Naive thymus-derived CD4-positive, alpha-beta T cell (primary cell): ENCODE measurements at regions of chr10 and their contacts with region 1.

Region 1: DNA sequence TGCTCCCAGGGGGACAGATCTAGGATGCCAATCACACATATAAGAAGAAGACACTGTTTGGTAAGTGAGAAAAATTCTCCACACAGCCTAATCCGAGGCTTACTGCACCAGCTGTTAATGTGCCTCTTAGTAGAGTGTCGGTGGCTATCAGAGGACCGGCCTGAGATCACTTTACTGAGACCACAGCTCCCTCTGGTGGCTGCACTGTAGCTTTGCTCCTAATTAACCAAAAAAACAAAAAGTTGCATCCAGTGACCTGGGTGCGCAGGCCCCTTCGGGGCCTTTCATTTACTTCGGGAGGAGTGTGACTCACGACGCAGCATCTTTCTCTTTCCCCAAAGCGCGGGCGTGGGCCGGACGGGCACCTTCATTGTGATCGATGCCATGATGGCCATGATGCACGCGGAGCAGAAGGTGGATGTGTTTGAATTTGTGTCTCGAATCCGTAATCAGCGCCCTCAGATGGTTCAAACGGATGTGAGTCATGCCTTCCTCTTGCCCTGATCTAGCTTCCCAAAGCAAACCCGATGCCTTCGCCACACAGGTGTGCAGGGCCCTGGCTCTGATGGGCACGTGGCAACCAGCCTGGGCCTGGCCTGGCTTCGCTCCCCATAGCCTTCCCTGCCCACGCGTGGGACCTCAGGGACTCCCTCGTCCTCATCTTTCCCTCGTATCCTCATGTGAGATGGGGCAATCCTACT is 56.7 kb downstream of the MKI67 start:
- DNase-seq: peak; percentile 56 to 81 (median 76)
- ATAC-seq: peak; percentile 66
- H3K4me3 ChIP-seq: no peak overlapping the region
- H3K4me3 Mint-ChIP-seq: no peak overlapping the region
- H3K27ac ChIP-seq: no peak overlapping the region
- H3K27ac Mint-ChIP-seq: peak overlapping the region in 4 of 9 donors; percentile 45 to 65 (median 54)
- H3K4me1 ChIP-seq: peaks cover 16 to 19% of the 10 kb centered on the region in 2 donors
- H3K4me1 Mint-ChIP-seq: peaks cover 31 to 50% (median 37%) of the 10 kb centered on the region in 7 donors
- H3K27me3 ChIP-seq: no peaks in the 10 kb centered on the region
- H3K27me3 Mint-ChIP-seq: no peaks in the 10 kb centered on the region

Region 2: DNA sequence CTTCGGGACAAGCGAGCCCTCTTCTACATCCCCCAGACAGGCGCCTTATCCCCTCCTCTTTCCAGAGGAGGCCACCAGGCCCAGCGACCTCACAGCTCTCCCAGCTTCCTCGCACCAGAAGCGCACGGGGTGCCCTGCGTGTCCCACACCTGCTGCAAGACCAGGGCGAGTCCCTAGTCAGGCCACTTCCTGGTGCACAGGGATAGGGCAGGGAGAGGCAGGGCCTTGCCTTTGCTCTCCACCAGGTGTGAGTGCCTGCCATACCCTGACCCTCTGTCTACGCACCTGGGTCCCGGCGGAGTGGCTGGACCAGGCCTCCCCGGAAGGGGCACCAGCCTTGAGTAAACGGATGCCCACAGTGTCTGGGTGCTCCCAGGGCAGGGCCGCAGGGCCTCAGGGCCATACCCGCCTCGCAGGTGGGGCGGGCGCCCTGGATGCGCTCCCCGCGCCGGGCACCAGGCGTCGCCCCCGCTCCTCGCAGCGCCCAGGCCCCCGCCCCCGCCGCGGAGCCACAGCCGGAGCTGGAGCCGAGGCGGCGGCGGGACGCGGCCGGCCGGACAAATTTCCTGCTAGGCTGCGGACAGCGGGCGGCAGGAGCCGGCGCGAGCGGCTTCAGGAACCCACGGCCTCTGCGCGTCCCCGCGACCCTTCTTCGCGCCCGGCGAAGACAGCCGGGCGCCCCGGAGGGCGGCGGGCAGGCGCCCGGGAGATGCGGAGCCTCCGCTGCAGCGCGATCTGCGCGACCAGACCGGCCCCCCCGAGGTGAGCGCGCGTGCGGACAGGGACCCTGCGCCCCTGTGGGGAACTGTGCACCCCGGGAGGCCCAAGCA is 162.7 kb before region 1 on chr10 and contains the start of gene PTPRE:
- CTCF ChIA-PET with region 1: interaction called, 11 read pairs
- POLR2A ChIA-PET with region 1: no interaction called
- intact Hi-C with region 1: loop called in 1 of 2 experiments (anchors 1 kb)
- DNase-seq: peak; percentile 18 to 82 (median 65)
- ATAC-seq: peak; percentile 95
- H3K4me3 ChIP-seq: peak within 1 kb of the TSS; percentile 39
- H3K4me3 Mint-ChIP-seq: peak within 1 kb of the TSS; percentile 8 to 61 (median 38)
- H3K27ac ChIP-seq: no peak within 1 kb of the TSS
- H3K27ac Mint-ChIP-seq: no peak within 1 kb of the TSS
- H3K4me1 ChIP-seq: no peaks in the 10 kb centered on the region
- H3K4me1 Mint-ChIP-seq: peaks cover 0 to 8% (median 0%) of the 10 kb centered on the region in 7 donors
- H3K27me3 ChIP-seq: no peaks in the 10 kb centered on the region
- H3K27me3 Mint-ChIP-seq: peaks cover 20 to 44% (median 24%) of the 10 kb centered on the region in 5 donors
- total RNA-seq, gene PTPRE: 25.4 to 237 (median 29.1) TPM

Region 3: GRCh38 chr10:127919418-127920271 is 149.9 kb before region 1 on chr10:
- CTCF ChIA-PET with region 1: no interaction called
- POLR2A ChIA-PET with region 1: no interaction called
- intact Hi-C with region 1: no loop called
- DNase-seq: no peak
- ATAC-seq: peak; percentile 36
- H3K4me3 ChIP-seq: no peak overlapping the region
- H3K4me3 Mint-ChIP-seq: no peak overlapping the region
- H3K27ac ChIP-seq: no peak overlapping the region
- H3K27ac Mint-ChIP-seq: no peak overlapping the region
- H3K4me1 ChIP-seq: no peaks in the 10 kb centered on the region
- H3K4me1 Mint-ChIP-seq: peaks cover 0 to 10% (median 0%) of the 10 kb centered on the region in 7 donors
- H3K27me3 ChIP-seq: no peaks in the 10 kb centered on the region
- H3K27me3 Mint-ChIP-seq: no peaks in the 10 kb centered on the region

Region 4: DNA sequence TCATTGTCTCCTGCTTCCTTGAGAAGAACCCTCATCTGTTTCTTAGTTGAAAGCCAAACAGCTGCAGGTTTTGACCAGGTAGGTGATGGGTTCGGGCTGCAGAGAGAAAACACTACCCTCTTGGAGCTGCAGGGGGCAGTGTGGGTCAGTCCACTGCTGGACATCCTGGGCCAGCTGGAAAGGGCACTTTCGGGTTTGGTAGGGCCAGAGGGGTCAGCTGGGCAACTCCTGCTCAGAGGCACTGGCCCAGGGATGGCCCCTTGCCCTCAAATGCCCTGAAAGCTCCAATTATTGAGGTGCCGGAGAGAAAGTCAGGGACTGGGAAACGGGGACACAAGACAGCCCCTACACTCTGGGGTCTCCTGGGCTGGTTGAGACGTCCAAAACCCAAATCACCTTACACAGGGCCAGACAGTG is 33.9 kb before region 1 on chr10:
- CTCF ChIA-PET with region 1: interaction called, 217 read pairs
- POLR2A ChIA-PET with region 1: interaction called, 7 read pairs
- intact Hi-C with region 1: loop called (anchors 1 kb)
- DNase-seq: peak in 8 of 9 donors; percentile 33 to 69 (median 50)
- ATAC-seq: peak; percentile 94
- H3K4me3 ChIP-seq: no peak overlapping the region
- H3K4me3 Mint-ChIP-seq: no peak overlapping the region
- H3K27ac ChIP-seq: no peak overlapping the region
- H3K27ac Mint-ChIP-seq: no peak overlapping the region
- H3K4me1 ChIP-seq: no peaks in the 10 kb centered on the region
- H3K4me1 Mint-ChIP-seq: peaks cover 0 to 10% (median 0%) of the 10 kb centered on the region in 7 donors
- H3K27me3 ChIP-seq: no peaks in the 10 kb centered on the region
- H3K27me3 Mint-ChIP-seq: peaks cover 0 to 9% (median 0%) of the 10 kb centered on the region in 5 donors

Region 5: GRCh38 chr10:128058750-128059134 is 10.8 kb before region 1 on chr10:
- CTCF ChIA-PET with region 1: interaction called, 10 read pairs
- POLR2A ChIA-PET with region 1: no interaction called
- intact Hi-C with region 1: no loop called
- DNase-seq: no peak
- ATAC-seq: no peak
- H3K4me3 ChIP-seq: no peak overlapping the region
- H3K4me3 Mint-ChIP-seq: no peak overlapping the region
- H3K27ac ChIP-seq: no peak overlapping the region
- H3K27ac Mint-ChIP-seq: peak overlapping the region in 7 of 9 donors; percentile 5 to 78 (median 57)
- H3K4me1 ChIP-seq: peaks cover 18 to 37% of the 10 kb centered on the region in 2 donors
- H3K4me1 Mint-ChIP-seq: peaks cover 23 to 74% (median 46%) of the 10 kb centered on the region in 7 donors
- H3K27me3 ChIP-seq: no peaks in the 10 kb centered on the region
- H3K27me3 Mint-ChIP-seq: no peaks in the 10 kb centered on the region

Region 6: DNA sequence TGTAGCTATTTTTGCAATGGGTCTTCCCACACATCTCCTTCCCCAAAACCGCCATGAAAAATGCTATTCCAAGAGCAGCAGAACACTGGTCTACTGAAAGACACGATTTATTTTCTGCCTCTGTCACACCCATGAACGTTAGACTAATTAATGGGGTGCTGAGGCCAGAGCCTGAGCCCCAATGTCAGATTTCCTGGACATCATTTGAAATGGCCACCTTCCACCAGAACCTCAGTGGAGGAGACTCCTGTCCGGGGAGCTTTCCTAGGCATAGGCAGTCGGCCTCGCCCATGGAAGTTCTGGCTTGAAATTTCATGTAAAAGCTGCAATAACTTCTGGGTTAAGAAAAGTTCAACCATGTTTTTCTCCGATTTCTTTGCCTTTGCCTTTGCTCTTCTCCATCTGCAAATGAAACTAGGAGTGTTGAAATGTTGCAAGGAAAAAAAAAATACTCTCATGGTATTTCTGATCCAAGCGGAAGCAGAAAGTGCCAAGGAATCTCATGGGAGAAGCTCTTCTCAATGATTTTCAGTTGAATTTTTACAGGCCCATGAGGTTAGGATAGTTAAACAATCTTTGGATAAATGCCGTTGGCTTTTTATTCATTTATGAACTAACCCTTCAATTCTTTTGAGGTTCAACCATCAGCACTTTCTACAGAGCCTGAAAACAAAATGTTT is 826.8 kb after region 1 on chr10:
- CTCF ChIA-PET with region 1: no interaction called
- POLR2A ChIA-PET with region 1: no interaction called
- intact Hi-C with region 1: no loop called
- DNase-seq: no peak
- ATAC-seq: no peak
- H3K4me3 ChIP-seq: no peak overlapping the region
- H3K4me3 Mint-ChIP-seq: no peak overlapping the region
- H3K27ac ChIP-seq: no peak overlapping the region
- H3K27ac Mint-ChIP-seq: no peak overlapping the region
- H3K4me1 ChIP-seq: no peaks in the 10 kb centered on the region
- H3K4me1 Mint-ChIP-seq: no peaks in the 10 kb centered on the region
- H3K27me3 ChIP-seq: no peaks in the 10 kb centered on the region
- H3K27me3 Mint-ChIP-seq: peaks cover 0 to 4% (median 0%) of the 10 kb centered on the region in 5 donors

Region 7: GRCh38 chr10:129466703-129467358 is 1397.3 kb after region 1 on chr10 and contains the start of gene MGMT:
- CTCF ChIA-PET with region 1: no interaction called
- POLR2A ChIA-PET with region 1: no interaction called
- intact Hi-C with region 1: loop called in 1 of 2 experiments (anchors 10 kb)
- DNase-seq: peak; percentile 91 to 98 (median 96)
- ATAC-seq: peak; percentile 99
- H3K4me3 ChIP-seq: peak within 1 kb of the TSS; percentile 74
- H3K4me3 Mint-ChIP-seq: peak within 1 kb of the TSS; percentile 74 to 90 (median 87)
- H3K27ac ChIP-seq: peak within 1 kb of the TSS; percentile 85
- H3K27ac Mint-ChIP-seq: peak within 1 kb of the TSS; percentile 71 to 91 (median 84)
- H3K4me1 ChIP-seq: peaks cover 11 to 13% of the 10 kb centered on the region in 2 donors
- H3K4me1 Mint-ChIP-seq: peaks cover 8 to 31% (median 26%) of the 10 kb centered on the region in 7 donors
- H3K27me3 ChIP-seq: no peaks in the 10 kb centered on the region
- H3K27me3 Mint-ChIP-seq: no peaks in the 10 kb centered on the region
- total RNA-seq, gene MGMT: 17.6 to 23.9 (median 21.8) TPM